Breast epithelium (tissue), 4 donors: ENCODE measurements at regions of chr5 and their contacts with region 1.

Region 1: DNA sequence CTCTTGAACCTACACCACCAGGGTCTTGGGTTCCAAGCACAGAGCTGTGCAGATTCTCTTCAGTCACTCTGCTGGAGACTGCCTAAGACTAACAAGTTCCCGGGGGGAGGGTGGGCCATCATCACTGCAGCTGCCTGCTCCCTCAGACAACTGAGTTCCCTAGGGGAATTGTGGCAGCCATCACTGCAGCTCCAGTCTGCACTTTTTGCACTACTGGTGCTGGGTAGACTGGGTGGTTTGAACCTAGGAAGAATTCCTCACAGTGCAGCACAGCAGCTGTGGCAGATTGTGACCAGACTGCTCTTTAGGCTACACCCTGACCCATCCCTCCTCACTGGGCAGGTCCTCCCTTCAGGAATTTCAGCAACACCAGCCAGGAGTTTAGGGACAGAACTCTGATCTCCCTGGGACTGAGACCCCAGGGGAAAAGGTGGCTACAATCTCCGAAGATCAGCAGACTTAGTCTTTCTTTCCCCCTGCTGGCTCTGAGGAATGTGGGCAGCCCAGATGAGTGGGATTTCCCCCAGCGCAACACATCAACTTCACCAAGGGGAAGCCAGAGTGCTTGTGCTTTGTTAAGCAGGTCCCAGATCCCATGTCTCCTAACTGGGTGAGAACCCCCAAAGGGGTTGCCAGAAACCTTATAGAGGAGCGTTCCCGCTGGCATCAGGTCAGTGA is 30.9 kb upstream of the RGMB start:
- DNase-seq: no peak
- H3K4me3 ChIP-seq: no peak overlapping the region
- H3K27ac ChIP-seq: no peak overlapping the region
- H3K4me1 ChIP-seq: no peaks in the 10 kb centered on the region
- H3K27me3 ChIP-seq: no peaks in the 10 kb centered on the region
- CTCF ChIP-seq: no peak
- POLR2A ChIP-seq: no peak

Region 2: DNA sequence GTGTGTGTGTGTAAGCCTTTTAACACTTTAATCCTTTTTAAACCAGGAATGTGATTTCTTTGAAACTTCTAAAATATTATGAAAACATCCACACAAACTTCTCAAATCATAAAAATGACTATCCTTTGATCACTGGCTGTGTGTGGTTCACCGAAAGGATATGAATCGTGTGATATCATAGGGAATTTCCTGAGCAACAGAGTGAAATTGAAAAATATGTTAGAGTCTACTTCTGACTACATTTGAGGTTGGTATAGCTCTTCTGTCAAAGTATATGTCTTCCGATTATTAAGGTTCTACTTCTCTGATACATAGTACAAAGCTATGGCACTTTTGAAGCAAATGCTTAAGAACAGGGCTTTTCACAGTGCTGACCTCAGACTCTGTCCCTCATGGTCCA is 71.2 kb after region 1 on chr5:
- intact Hi-C with region 1: loop called (anchors 2 kb)
- DNase-seq: no peak
- H3K4me3 ChIP-seq: no peak overlapping the region
- H3K27ac ChIP-seq: no peak overlapping the region
- H3K4me1 ChIP-seq: no peaks in the 10 kb centered on the region
- H3K27me3 ChIP-seq: no peaks in the 10 kb centered on the region
- CTCF ChIP-seq: no peak
- POLR2A ChIP-seq: no peak